ENCODE measurements at regions of chr15 and their contacts with region 1.

Region 1: GRCh38 chr15:99928429-99928981 is 195.3 kb upstream of the LYSMD4 start:
- DNase-seq: peak; percentile 65
- H3K27ac ChIP-seq: peak overlapping the region; percentile 98
- CTCF ChIP-seq: peak; percentile 57

Region 2: GRCh38 chr15:99961011-99961441 is 32.5 kb after region 1 on chr15:
- CTCF ChIA-PET with region 1: interaction called, 13 read pairs
- POLR2A ChIA-PET with region 1: no interaction called
- DNase-seq: no peak
- H3K27ac ChIP-seq: no peak overlapping the region
- CTCF ChIP-seq: no peak; the same call in 1 of the 2 replicates

Region 3: DNA sequence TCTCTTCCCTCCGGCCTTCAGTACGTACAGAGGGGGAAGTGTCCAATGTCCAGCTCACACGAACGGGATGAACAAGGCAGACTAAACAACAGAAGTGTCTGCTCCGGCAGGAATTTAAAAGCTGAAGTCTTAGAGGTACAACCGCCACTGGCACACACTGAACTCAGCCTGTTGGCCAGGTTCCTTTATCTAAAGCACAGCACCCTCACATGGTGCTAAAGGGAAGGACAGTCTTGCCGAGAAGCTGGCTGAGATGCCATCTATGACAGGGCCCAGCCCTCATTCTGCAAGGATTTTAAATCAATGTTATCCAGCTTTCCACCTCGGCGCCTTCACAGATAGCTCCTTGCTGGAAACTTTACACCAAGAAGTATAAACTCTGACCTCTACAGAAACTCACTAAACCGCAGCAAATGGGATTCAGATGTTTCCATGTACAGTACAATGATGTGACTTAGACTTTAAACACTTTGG is 410.5 kb after region 1 on chr15:
- CTCF ChIA-PET with region 1: interaction called, 17 read pairs
- POLR2A ChIA-PET with region 1: no interaction called
- DNase-seq: peak; percentile 52
- H3K27ac ChIP-seq: no peak overlapping the region; the same call in 1 of the 2 replicates
- CTCF ChIP-seq: peak; percentile 67